Panc1 (cell line): ENCODE measurements at regions of chr6 and their contacts with region 1.

Region 1: GRCh38 chr6:25027221-25027916 is 91.6 kb upstream of the RIPOR2 start:
- DNase-seq: peak; percentile 2
- ATAC-seq: peak; percentile 51; the same call in 1 of the 2 replicates
- H3K4me3 ChIP-seq: no peak overlapping the region; a peak in 1 of 4 replicates
- H3K27ac ChIP-seq: no peak overlapping the region
- H3K4me1 ChIP-seq: no peaks in the 10 kb centered on the region
- H3K27me3 ChIP-seq: no peaks in the 10 kb centered on the region
- CTCF ChIP-seq: no peak

Region 2: DNA sequence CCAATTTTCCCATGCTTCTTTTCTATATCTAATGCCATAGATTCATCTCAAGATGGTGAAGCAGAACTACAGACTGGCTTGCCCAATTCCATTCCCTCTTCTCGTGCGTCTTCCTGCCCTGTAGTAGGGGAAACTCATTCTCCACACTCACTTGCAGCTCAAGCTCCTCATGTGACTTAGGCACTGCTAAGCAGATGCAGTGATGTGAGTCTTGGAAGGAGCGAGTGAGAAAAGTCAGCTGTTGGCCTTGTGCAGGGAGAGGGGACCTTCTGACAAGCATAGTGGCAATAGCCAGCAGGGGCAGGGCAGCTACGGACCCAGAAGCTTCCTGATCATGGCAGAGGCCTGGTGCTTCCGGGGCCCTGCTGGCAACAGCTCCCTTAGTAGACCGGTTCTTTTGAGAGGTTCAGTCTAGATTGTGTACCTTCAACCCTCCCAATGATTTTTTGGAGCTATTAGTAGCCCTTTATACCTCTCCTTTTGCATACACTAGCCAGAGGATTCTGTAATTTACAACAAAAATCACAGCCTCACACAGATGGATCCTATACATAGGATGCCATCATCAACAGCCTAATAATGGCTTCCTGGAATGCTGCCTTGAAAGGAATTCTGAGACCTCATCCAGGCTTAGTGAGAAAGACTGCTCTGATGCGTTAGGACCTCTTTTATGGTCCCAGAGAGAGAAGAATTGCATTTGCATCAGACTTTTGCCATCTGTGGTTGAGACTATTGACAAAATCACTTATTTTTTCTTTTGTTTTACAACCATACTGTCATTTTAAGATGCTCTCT is 29.9 kb after region 1 on chr6:
- CTCF ChIA-PET with region 1: no interaction called
- POLR2A ChIA-PET with region 1: interaction called, 11 read pairs
- in situ Hi-C with region 1: no loop called
- intact Hi-C with region 1: no loop called
- DNase-seq: no peak
- ATAC-seq: no peak
- H3K4me3 ChIP-seq: no peak overlapping the region
- H3K27ac ChIP-seq: no peak overlapping the region
- H3K4me1 ChIP-seq: no peaks in the 10 kb centered on the region
- H3K27me3 ChIP-seq: no peaks in the 10 kb centered on the region
- CTCF ChIP-seq: no peak

Region 3: GRCh38 chr6:25330796-25331685 is 303.7 kb after region 1 on chr6:
- CTCF ChIA-PET with region 1: no interaction called
- POLR2A ChIA-PET with region 1: no interaction called
- in situ Hi-C with region 1: no loop called
- intact Hi-C with region 1: no loop called
- DNase-seq: no peak
- ATAC-seq: no peak
- H3K4me3 ChIP-seq: no peak overlapping the region
- H3K27ac ChIP-seq: no peak overlapping the region
- H3K4me1 ChIP-seq: no peaks in the 10 kb centered on the region
- H3K27me3 ChIP-seq: no peaks in the 10 kb centered on the region
- CTCF ChIP-seq: no peak